Psoas muscle (tissue), 8 donors: ENCODE measurements at regions of chr2 and their contacts with region 1.

Region 1: DNA sequence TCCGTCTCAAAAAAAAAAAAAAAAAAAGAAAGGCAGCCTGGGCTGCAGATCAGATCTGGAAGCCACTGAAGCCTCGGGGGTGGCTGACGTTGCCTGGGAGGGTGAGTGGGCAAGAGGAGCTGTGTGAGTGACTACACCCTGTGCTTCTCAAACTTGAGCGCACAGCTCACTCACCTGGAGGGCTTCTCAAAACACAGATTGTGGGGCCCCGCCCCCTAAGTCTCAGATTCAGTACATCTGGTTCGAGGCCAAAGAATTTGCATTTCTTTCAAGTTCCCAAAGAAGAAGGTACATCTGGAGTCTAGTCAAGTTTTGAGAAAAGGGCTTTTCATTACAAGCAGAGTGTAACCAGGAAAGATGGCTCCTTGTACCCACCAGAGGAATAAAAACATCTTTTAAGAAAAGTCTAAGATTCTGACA is 97.7 kb upstream of the CAB39 start:
- DNase-seq: no peak
- ATAC-seq: no peak
- H3K4me3 ChIP-seq: no peak overlapping the region
- H3K27ac ChIP-seq: no peak overlapping the region
- H3K4me1 ChIP-seq: no peaks in the 10 kb centered on the region
- H3K27me3 ChIP-seq: no peaks in the 10 kb centered on the region
- CTCF ChIP-seq: no peak

Region 2: GRCh38 chr2:229800997-229801754 is 813.7 kb before region 1 on chr2:
- intact Hi-C with region 1: loop called in 1 of 2 experiments (anchors 10 kb)
- DNase-seq: peak; percentile 34 to 59
- ATAC-seq: peak; percentile 51 to 86 (median 64)
- H3K4me3 ChIP-seq: no peak overlapping the region
- H3K27ac ChIP-seq: no peak overlapping the region
- H3K4me1 ChIP-seq: peaks cover 9% of the 10 kb centered on the region
- H3K27me3 ChIP-seq: no peaks in the 10 kb centered on the region
- CTCF ChIP-seq: peak; percentile 78

Region 3: DNA sequence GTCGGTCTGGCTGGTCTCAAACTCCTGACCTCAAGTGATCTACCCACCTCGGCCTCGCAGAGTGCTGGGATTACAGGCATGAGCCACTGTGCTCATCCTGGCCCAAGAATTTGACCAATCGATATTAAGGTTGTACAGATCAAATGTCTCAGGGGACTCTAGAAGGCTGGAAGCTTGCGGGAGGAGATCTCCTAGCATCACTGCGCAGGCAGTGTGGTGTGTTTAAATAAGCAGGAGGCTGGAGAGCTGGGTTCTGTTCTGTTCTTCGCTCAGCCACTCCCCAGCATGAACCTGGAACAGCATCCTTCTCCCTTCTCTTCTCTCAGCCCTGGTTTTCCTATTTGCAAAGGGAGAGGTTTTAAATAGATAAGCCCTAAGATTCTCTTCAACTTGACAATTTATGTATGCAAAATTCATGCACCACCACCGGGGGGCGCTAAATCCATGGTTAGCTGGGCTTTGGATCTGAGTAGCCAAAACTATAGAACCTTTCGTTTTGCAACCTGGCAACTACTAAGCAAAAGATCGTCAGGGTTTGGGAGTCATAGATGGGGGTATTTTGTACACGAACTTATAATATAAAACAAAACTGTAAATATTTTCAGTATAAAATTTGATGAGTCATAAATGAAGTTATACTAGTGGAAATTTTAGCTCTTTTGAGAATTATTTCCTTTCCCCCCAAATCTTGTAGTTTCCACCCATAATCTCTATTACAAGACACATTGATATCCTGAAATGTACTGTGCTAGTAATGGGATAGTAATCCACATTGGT is 606.8 kb before region 1 on chr2:
- intact Hi-C with region 1: loop called (anchors 2 to 10 kb)
- DNase-seq: peak; percentile 68 to 72
- ATAC-seq: peak; percentile 44 to 57 (median 48)
- H3K4me3 ChIP-seq: peak overlapping the region; percentile 35
- H3K27ac ChIP-seq: no peak overlapping the region
- H3K4me1 ChIP-seq: no peaks in the 10 kb centered on the region
- H3K27me3 ChIP-seq: no peaks in the 10 kb centered on the region
- CTCF ChIP-seq: peak; percentile 73

Region 4: GRCh38 chr2:230018153-230018552 is 596.8 kb before region 1 on chr2:
- intact Hi-C with region 1: loop called in 1 of 2 experiments (anchors 10 kb)
- DNase-seq: no peak
- ATAC-seq: no peak
- H3K4me3 ChIP-seq: no peak overlapping the region
- H3K27ac ChIP-seq: no peak overlapping the region
- H3K4me1 ChIP-seq: no peaks in the 10 kb centered on the region
- H3K27me3 ChIP-seq: peaks cover 0 to 5% (median 0%) of the 10 kb centered on the region in 3 donors
- CTCF ChIP-seq: no peak

Region 5: GRCh38 chr2:230219419-230220331 is 395.2 kb before region 1 on chr2 and contains the start of gene SP110:
- intact Hi-C with region 1: loop called in 1 of 2 experiments (anchors 10 kb)
- DNase-seq: peak; percentile 69 to 80
- ATAC-seq: peak; percentile 85 to 96 (median 92)
- H3K4me3 ChIP-seq: peak within 1 kb of the TSS; percentile 68
- H3K27ac ChIP-seq: peak within 1 kb of the TSS; percentile 62
- H3K4me1 ChIP-seq: no peaks in the 10 kb centered on the region
- H3K27me3 ChIP-seq: no peaks in the 10 kb centered on the region
- CTCF ChIP-seq: no peak
- total RNA-seq, gene SP110: 5.2 to 15.9 (median 7.3) TPM

Region 6: GRCh38 chr2:230712443-230713330 is 97.8 kb after region 1 on chr2 and contains the start of gene CAB39:
- intact Hi-C with region 1: no loop called
- DNase-seq: peak; percentile 88 to 92
- ATAC-seq: peak; percentile 90 to 94 (median 91)
- H3K4me3 ChIP-seq: peak within 1 kb of the TSS; percentile 88
- H3K27ac ChIP-seq: peak within 1 kb of the TSS; percentile 97
- H3K4me1 ChIP-seq: peaks cover 38% of the 10 kb centered on the region
- H3K27me3 ChIP-seq: no peaks in the 10 kb centered on the region
- CTCF ChIP-seq: peak; percentile 89
- total RNA-seq, gene CAB39: 107 to 139 (median 128) TPM